ENCODE measurements at regions of chr14 and their contacts with region 1.

Region 1: DNA sequence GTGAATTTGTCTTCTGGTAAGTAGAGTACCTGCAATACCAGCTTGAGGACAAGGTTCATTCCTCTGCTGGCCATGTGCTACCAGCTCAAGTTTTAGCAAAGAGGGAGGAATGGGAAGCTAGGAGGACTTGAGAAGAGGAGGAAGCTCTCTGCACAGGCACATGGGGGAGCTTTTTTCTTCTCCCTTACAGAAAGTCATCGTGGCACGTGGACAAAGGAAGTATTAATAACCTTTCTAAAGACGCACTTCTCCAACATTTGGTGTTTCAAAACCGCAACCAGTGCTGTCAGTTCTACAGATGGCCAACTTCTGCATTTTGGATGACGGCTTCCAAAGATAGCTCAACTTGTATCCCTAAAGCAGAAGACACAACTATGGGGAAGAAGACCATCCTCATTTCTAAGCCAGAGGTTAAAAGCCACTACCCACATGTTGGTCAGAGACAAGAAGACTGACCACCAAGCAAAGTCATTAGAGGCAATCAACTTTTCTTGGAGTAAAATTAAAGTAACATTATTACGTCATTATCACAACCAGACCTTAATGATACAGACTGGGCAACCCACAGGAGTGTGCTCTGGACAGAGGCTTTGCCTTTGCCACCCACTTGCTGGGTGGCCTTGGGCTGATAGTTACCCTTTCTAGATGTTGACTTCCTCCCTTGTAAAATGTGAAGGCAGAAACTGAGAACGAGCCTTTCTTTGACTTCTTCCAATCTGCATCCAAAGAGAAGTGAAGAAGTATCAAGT is 12.3 kb upstream of the TMED10 start:
- H3K4me3 Mint-ChIP-seq: no peak overlapping the region
- H3K27ac Mint-ChIP-seq: peak overlapping the region; percentile 80
- H3K4me1 Mint-ChIP-seq: peaks cover 44% of the 10 kb centered on the region
- H3K27me3 Mint-ChIP-seq: peaks cover 4% of the 10 kb centered on the region

Region 2: GRCh38 chr14:75223664-75224154 is 35.0 kb after region 1 on chr14:
- intact Hi-C with region 1: loop called (anchors 5 kb)
- H3K4me3 Mint-ChIP-seq: no peak overlapping the region
- H3K27ac Mint-ChIP-seq: peak overlapping the region; percentile 45
- H3K4me1 Mint-ChIP-seq: peaks cover 53% of the 10 kb centered on the region
- H3K27me3 Mint-ChIP-seq: no peaks in the 10 kb centered on the region

Region 3: DNA sequence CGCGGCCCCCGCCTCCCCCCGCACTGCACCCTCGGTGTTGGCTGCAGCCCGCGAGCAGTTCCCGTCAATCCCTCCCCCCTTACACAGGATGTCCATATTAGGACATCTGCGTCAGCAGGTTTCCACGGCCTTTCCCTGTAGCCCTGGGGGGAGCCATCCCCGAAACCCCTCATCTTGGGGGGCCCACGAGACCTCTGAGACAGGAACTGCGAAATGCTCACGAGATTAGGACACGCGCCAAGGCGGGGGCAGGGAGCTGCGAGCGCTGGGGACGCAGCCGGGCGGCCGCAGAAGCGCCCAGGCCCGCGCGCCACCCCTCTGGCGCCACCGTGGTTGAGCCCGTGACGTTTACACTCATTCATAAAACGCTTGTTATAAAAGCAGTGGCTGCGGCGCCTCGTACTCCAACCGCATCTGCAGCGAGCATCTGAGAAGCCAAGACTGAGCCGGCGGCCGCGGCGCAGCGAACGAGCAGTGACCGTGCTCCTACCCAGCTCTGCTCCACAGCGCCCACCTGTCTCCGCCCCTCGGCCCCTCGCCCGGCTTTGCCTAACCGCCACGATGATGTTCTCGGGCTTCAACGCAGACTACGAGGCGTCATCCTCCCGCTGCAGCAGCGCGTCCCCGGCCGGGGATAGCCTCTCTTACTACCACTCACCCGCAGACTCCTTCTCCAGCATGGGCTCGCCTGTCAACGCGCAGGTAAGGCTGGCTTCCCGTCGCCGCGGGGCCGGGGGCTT is 89.9 kb after region 1 on chr14 and contains the start of gene FOS:
- intact Hi-C with region 1: loop called (anchors 5 kb)
- H3K4me3 Mint-ChIP-seq: peak within 1 kb of the TSS; percentile 90
- H3K27ac Mint-ChIP-seq: peak within 1 kb of the TSS; percentile 98
- H3K4me1 Mint-ChIP-seq: peaks cover 72% of the 10 kb centered on the region
- H3K27me3 Mint-ChIP-seq: peaks cover under 1% of the 10 kb centered on the region